Left cardiac atrium (tissue), 4 donors: ENCODE measurements at regions of chr2 and their contacts with region 1.

Region 1: GRCh38 chr2:165471349-165471950 is 2.0 kb downstream of the CSRNP3 start:
- DNase-seq: no peak
- ATAC-seq: peak in 1 of 2 donors; percentile 43

Region 2: DNA sequence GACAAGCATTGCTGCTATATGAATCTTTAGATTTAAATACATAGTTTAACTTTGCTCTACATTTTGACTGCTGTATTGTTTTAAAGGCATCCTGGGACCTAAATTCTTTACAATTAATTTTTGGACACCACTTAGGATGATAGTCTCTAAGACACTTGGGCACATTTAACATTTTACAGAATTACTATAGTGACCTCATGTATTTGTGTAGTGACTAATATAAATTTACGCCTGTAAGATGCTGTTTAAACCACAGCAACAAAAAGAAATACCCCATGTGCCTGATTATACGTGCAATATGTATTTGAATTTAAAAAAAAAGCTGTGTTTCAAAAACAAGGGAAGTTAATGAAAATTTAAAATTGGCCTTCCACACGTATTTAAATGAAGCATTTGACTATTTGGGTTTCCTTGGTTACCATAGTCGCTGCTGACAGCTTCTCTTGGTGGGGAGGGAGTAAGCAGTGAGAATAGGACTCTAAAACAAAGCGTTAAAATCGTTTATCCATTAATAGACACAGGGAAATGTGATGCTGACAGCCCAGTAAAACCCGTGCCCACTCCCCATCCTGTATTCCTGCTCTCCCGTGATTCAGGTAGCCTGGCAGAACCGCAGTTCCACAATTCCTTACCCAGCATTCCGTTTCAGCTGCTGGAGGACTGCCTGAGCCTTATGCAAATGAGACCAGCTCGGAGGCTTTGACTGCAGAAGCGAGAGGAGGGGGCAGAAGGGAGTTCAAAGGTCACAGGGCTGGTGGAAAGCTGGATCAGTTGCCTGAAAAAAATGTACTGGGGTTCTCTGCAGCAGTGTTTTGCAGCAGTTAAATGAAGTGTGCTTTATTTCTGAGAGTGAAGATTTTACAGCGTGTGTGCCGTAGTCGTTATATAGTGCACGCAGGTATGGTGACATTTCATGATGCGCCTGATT is 102.3 kb after region 1 on chr2:
- intact Hi-C with region 1: loop called in 1 of 2 experiments (anchors 10 kb)
- DNase-seq: peak; percentile 37
- ATAC-seq: peak; percentile 91 to 95